Psoas muscle (tissue), 8 donors: ENCODE measurements at regions of chr4 and their contacts with region 1.

Region 1: GRCh38 chr4:32798471-32799159 is 2078.4 kb downstream of the PCDH7 start:
- DNase-seq: no peak
- ATAC-seq: no peak
- H3K4me3 ChIP-seq: no peak overlapping the region
- H3K27ac ChIP-seq: no peak overlapping the region
- H3K4me1 ChIP-seq: no peaks in the 10 kb centered on the region
- H3K27me3 ChIP-seq: no peaks in the 10 kb centered on the region
- CTCF ChIP-seq: no peak

Region 2: DNA sequence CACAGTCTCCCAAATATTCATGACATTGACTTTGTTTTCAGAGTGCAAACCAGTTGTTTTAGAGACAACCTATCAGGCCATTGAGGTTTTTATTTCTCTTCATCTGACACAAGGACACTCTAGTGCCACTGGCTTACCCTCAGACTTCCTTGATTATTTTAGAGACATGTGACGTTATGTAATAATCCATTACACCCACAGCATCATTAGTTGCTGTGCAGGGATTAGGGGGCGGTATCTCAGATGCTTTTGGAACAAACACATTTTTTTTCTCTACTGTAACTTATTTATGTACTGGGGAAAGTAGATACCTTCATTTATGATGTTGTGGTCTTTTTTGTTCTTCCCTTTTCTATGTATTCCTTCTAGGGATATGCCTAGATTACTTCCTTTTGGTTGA is 214.7 kb after region 1 on chr4:
- intact Hi-C with region 1: loop called in 1 of 2 experiments (anchors 5 kb)
- DNase-seq: no peak
- ATAC-seq: no peak
- H3K4me3 ChIP-seq: no peak overlapping the region
- H3K27ac ChIP-seq: no peak overlapping the region
- H3K4me1 ChIP-seq: no peaks in the 10 kb centered on the region
- H3K27me3 ChIP-seq: no peaks in the 10 kb centered on the region
- CTCF ChIP-seq: no peak